ENCODE measurements at regions of chr5 and their contacts with region 1.

Region 1: DNA sequence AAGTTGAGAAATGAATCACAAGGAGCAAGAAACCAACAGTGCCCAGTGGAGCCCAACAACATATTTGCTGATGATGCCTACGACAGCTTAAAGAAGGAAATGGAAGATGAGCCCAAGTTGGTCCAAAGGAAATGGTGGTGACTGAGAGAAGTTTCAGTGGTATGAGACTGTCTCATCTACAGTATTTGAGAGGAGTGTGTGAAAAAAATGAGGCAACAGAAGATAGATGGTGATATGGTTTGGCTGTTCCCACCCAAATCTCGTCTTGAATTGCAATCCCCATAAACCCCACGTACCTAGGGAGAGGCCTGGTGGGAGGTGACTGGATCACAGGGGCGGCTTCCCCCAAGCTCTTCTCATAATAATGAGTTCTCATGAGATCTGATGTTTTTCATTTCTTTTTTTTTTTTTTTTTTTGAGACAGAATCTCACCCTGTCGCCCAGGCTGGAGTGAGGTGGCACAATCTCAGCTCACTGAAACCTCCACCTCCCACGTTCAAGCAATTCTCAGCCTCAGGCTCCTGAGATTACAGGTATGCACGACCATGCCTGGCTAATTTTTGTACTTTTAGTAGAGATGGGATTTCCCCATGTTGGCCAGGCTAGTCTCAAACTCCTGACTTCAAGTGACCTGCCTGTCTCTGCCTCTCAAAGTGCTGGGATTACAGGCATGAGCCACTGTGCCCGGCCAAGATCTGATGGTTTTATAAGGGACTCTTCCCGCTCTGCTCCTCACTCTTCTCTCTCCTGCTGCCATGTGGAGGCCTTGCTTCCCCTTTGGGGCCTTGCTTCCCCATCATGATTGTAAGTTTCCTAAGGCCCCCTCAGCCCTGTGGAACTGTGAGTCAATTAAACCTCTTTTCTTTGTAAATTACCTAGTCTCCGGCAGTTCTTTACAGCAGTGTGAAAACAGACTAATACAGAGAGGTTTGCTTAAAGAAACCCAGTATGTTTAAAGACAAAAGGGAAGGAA is 30.2 kb downstream of the EFCAB9 start:
- DNase-seq: peak; percentile 82
- ATAC-seq: peak; percentile 91
- H3K4me3 Mint-ChIP-seq: peak overlapping the region; percentile 5
- H3K27ac Mint-ChIP-seq: peak overlapping the region; percentile 72
- H3K4me1 Mint-ChIP-seq: peaks cover 38% of the 10 kb centered on the region
- H3K27me3 Mint-ChIP-seq: peaks cover 1% of the 10 kb centered on the region

Region 2: DNA sequence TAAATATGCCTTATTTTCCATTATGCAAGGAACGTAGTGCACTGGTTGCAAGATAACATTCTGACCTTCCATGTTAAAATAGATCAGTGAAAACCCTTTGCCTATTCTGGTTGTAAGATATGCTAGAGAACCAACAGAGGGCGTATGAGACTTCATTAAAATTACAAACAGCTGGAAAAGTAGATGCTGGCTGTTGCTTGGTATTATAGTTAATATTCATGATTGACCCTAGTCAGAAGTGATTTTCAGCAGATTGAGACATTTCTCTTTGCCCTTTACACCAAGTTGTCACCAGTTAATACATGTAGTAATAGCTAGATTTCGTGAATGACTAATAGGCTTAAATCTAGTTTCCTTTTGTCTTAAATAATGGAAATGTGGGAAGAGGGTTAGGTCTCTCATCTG is 818.6 kb before region 1 on chr5:
- CTCF ChIA-PET with region 1: no interaction called
- POLR2A ChIA-PET with region 1: no interaction called
- intact Hi-C with region 1: no loop called
- DNase-seq: no peak
- ATAC-seq: peak; percentile 42
- H3K4me3 Mint-ChIP-seq: no peak overlapping the region
- H3K27ac Mint-ChIP-seq: peak overlapping the region; percentile 47
- H3K4me1 Mint-ChIP-seq: peaks cover 44% of the 10 kb centered on the region
- H3K27me3 Mint-ChIP-seq: no peaks in the 10 kb centered on the region

Region 3: DNA sequence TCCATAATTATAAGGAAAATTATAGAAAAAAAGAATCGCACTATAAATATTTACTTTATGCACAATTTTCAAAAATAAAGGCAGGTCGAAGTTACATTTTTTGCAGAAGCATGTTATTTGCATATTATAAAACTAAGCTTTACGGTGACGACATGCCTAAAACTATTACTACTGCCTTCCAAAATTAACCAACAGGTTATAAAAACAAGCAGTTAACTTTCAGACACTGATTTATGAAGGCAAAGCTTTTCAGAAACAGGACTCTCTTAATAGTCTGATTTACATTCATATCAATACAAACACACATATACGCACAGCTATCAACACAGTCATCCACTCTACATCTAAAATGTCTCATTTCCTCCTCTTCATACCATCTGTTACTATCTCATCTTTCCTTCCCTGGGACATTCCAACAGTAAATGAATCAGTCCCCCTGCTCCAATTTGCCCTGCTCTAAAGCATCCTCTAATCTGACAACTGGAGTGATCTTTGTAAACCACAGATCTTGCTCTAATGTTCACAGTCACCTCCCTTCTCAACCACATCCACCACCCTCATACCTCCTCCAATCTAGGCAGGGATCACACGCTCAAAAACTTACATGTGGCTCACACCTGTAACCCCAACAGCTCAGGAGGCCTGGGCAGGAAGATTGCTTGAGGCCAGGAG is 239.3 kb before region 1 on chr5:
- CTCF ChIA-PET with region 1: no interaction called
- POLR2A ChIA-PET with region 1: no interaction called
- intact Hi-C with region 1: loop called in 1 of 2 experiments (anchors 1 kb)
- DNase-seq: peak; percentile 64
- ATAC-seq: peak; percentile 83
- H3K4me3 Mint-ChIP-seq: no peak overlapping the region
- H3K27ac Mint-ChIP-seq: peak overlapping the region; percentile 56
- H3K4me1 Mint-ChIP-seq: peaks cover 48% of the 10 kb centered on the region
- H3K27me3 Mint-ChIP-seq: no peaks in the 10 kb centered on the region

Region 4: DNA sequence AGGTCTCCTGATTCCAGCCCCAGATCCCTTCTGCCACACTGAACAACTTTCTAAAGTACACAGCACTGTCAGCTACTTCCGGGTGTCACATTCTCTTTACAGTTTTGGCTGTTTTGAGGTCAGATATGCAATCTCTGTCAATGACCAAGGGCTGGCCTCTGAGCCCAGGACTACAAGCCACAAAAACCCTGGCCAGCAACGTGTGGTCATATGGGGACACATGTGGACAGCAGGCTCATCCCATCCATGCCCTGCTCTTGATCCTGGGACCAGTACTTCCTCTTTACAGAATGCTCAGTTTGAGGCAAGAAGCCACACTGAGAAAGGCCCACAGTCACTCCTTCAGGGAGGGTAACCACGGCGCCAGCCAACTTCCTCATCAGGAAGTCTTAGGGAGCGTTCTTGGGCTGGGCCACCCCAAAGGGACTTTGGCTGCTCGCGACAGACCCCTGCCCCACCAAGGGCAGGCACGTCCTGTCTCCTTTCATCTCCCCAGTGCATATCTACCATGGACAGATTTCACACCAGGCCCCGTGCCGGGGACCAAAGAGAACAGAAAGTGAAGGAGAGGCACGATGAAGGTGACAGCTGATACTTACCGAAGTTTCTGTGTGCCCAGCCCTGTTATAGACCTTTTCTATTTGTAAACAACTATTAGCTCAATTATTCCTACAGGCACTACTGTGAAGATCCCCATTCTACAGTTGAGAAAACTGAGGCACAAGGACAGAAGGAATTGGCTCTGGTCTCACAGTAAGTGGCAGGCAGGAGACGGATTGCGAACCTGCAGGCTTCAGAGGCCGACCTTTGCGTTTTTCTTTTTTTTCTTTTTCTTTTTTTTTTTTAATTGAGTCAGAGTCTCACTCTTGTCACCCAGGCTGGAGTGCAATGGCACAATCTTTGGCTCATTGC is 73.4 kb before region 1 on chr5:
- CTCF ChIA-PET with region 1: no interaction called
- POLR2A ChIA-PET with region 1: no interaction called
- intact Hi-C with region 1: no loop called
- DNase-seq: peak; percentile 49
- ATAC-seq: peak; percentile 76
- H3K4me3 Mint-ChIP-seq: peak overlapping the region; percentile 58
- H3K27ac Mint-ChIP-seq: peak overlapping the region; percentile 95
- H3K4me1 Mint-ChIP-seq: peaks cover 80% of the 10 kb centered on the region
- H3K27me3 Mint-ChIP-seq: no peaks in the 10 kb centered on the region

Region 5: GRCh38 chr5:172173831-172174153 is 50.4 kb before region 1 on chr5:
- CTCF ChIA-PET with region 1: interaction called, 4 read pairs
- POLR2A ChIA-PET with region 1: interaction called, 5 read pairs
- intact Hi-C with region 1: loop called in 1 of 2 experiments (anchors 1 kb)
- DNase-seq: peak; percentile 91
- ATAC-seq: peak; percentile 20
- H3K4me3 Mint-ChIP-seq: peak overlapping the region; percentile 75
- H3K27ac Mint-ChIP-seq: peak overlapping the region; percentile 99
- H3K4me1 Mint-ChIP-seq: peaks cover 96% of the 10 kb centered on the region
- H3K27me3 Mint-ChIP-seq: no peaks in the 10 kb centered on the region

Region 6: DNA sequence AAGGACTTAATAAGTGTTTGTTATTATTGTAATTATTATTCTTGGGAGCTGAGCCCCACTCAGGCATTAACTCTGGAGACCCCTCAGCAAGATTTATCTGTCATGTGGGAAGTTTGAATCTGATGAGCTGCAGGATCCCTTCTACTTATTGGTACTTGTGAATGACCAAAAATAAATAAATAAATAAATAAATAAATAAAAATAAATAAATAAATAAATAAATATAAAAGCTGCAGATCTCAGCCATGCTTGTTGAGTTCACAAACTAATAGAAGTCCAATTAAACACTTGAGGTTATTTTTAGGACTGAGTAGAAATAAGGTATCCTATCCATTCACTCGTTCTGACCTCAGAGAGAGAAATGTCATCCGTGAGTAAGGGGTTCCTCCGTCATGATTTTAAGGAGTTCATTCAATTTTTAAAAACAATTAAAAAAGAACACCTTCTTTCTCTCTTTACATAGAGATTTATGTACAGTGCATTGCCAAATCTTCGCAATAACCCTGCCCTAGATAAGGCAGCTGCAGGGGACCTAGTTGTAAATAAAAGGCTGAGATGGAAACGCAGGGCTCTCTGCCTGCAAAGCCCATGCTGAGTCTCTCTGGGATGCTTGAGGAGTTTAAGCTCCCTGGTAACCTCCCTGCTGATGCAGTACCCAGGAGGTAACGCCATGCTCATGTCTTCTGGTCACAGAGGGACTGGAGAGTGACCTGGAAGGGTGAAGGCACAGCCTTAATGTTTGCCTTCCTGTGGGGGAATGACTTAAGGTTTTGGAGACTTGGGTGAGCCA is 29.0 kb before region 1 on chr5:
- CTCF ChIA-PET with region 1: no interaction called
- POLR2A ChIA-PET with region 1: no interaction called
- intact Hi-C with region 1: no loop called
- DNase-seq: no peak
- ATAC-seq: no peak
- H3K4me3 Mint-ChIP-seq: no peak overlapping the region
- H3K27ac Mint-ChIP-seq: no peak overlapping the region
- H3K4me1 Mint-ChIP-seq: no peaks in the 10 kb centered on the region
- H3K27me3 Mint-ChIP-seq: peaks cover 3% of the 10 kb centered on the region

Region 7: DNA sequence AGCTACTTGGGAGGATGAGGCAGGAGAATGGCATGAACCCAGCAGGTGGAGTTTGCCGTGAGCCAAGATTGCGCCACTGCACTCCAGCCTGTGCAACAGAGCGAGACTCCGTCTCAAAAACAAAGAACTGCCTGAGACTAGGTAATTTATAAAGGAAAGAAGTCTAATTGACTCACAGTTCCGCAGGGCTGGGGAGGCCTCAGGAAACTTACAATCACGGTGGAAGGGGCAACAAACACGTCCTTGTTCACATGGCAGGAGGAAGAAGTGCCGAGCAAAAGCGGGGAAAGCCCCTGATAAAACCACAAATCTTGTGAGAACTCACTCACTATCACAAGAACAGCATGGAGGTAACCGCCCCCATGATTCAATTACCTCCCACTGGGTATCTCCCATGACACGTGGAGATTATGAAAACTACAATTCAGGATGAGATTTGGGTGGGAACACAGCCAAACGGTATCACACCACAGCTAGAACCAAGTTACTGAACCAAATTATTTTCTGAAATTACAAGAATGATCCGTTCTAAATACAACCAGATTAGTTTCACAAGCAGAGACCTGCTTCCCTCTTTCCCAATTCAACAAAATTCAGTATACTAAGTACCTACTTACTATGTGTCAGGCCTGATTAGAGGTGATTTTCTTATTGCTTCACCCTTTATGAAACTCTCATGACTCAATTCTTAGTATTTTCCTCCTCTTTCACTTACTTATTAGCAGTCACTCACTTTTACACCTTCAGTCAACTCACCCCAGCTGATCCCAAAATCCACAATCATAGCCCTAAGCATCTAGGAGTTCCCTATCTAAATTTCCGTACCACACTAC is 51.0 kb after region 1 on chr5:
- CTCF ChIA-PET with region 1: no interaction called
- POLR2A ChIA-PET with region 1: no interaction called
- intact Hi-C with region 1: loop called (anchors 1 kb)
- DNase-seq: peak; percentile 77
- ATAC-seq: peak; percentile 92
- H3K4me3 Mint-ChIP-seq: no peak overlapping the region
- H3K27ac Mint-ChIP-seq: peak overlapping the region; percentile 40
- H3K4me1 Mint-ChIP-seq: peaks cover 43% of the 10 kb centered on the region
- H3K27me3 Mint-ChIP-seq: no peaks in the 10 kb centered on the region

Region 8: GRCh38 chr5:172283020-172283861 is 59.1 kb after region 1 on chr5 and contains the start of gene UBTD2:
- CTCF ChIA-PET with region 1: interaction called, 3 read pairs
- POLR2A ChIA-PET with region 1: interaction called, 9 read pairs
- intact Hi-C with region 1: loop called in 1 of 2 experiments (anchors 1 kb)
- DNase-seq: peak; percentile 84
- ATAC-seq: peak; percentile 85
- H3K4me3 Mint-ChIP-seq: peak within 1 kb of the TSS; percentile 85
- H3K27ac Mint-ChIP-seq: peak within 1 kb of the TSS; percentile 87
- H3K4me1 Mint-ChIP-seq: peaks cover 16% of the 10 kb centered on the region
- H3K27me3 Mint-ChIP-seq: no peaks in the 10 kb centered on the region
- total RNA-seq, gene UBTD2: 6.0 to 6.1 TPM

Region 9: DNA sequence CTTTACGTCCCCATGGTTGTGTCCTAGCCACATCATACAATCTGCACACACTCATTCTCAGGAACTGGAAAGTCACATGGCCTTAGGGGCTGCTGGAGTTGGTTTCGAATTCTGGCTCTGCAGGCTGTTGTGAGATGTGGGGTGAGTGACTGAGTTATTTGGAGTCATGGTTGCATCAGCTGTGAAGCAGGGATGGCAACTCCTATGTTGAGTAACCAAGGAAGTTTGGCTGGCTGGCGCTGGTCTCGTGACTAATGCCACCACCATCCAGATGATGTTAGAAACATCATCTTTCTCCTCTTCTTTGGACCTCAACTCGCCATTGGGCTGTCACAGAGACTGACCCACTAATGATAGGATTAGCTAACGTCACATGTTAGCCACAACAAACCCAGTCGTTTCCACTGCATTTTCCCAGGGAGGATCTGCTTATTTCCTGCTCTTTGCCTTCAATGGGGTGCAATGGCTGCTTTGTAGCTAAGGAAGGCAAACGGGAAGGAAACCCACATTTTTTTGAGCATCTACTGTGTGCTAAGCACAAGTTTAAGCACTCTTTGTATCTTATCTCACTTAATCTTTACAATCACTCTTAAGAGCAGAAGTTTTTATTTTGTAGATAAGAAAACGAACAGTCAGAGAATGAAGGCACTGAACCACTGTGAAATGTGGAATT is 137.5 kb after region 1 on chr5:
- CTCF ChIA-PET with region 1: no interaction called
- POLR2A ChIA-PET with region 1: no interaction called
- intact Hi-C with region 1: loop called in 1 of 2 experiments (anchors 5 kb)
- DNase-seq: peak; percentile 83
- ATAC-seq: peak; percentile 96
- H3K4me3 Mint-ChIP-seq: no peak overlapping the region
- H3K27ac Mint-ChIP-seq: peak overlapping the region; percentile 88
- H3K4me1 Mint-ChIP-seq: peaks cover 11% of the 10 kb centered on the region
- H3K27me3 Mint-ChIP-seq: peaks cover 2% of the 10 kb centered on the region

Region 10: GRCh38 chr5:172412724-172413286 is 188.6 kb after region 1 on chr5:
- CTCF ChIA-PET with region 1: interaction called, 4 read pairs
- POLR2A ChIA-PET with region 1: no interaction called
- intact Hi-C with region 1: loop called in 1 of 2 experiments (anchors 1 kb)
- DNase-seq: peak; percentile 46
- ATAC-seq: peak; percentile 20
- H3K4me3 Mint-ChIP-seq: no peak overlapping the region
- H3K27ac Mint-ChIP-seq: peak overlapping the region; percentile 45
- H3K4me1 Mint-ChIP-seq: peaks cover 33% of the 10 kb centered on the region
- H3K27me3 Mint-ChIP-seq: peaks cover 7% of the 10 kb centered on the region

Measured in activated CD4-positive, alpha-beta T cell treated with anti-CD3 and anti-CD28 coated beads for 36 hours (primary cell).